ENCODE measurements at regions of chr15 and their contacts with region 1.

Region 1: DNA sequence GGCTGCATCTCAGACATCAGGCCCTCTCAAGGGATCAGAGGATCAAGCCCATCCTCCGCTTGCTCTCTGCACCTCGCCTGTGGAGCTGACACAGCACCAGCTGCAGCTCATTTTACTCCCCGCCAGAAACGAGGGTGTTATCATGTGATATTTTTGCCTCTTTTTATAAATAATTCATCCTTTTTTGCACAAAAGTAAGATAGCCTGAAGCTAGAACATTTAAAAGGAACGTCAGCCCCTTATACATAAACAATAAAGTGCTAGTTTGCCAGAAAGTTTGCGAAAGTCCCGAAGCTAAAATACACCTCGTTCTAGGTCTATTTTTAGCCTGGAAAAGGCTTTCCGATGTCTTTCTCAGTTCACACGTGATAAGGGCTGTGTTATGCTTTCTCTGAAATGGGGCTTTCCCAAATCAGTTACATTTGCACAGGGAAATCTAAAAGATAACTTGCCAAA is 9.6 kb upstream of the FAM174B start:
- DNase-seq: no peak
- H3K4me3 ChIP-seq: peak overlapping the region in 1 of 3 donors; percentile 12
- H3K27ac ChIP-seq: peak overlapping the region; percentile 40 to 66
- H3K4me1 ChIP-seq: peaks cover 0 to 9% of the 10 kb centered on the region in 2 donors
- H3K27me3 ChIP-seq: no peaks in the 10 kb centered on the region
- CTCF ChIP-seq: no peak
- POLR2A ChIP-seq: no peak

Region 2: GRCh38 chr15:92617549-92618520 is 47.3 kb before region 1 on chr15:
- intact Hi-C with region 1: loop called (anchors 10 kb)
- DNase-seq: peak; percentile 43 to 64
- H3K4me3 ChIP-seq: no peak overlapping the region
- H3K27ac ChIP-seq: peak overlapping the region; percentile 62 to 65
- H3K4me1 ChIP-seq: no peaks in the 10 kb centered on the region
- H3K27me3 ChIP-seq: no peaks in the 10 kb centered on the region
- CTCF ChIP-seq: no peak
- POLR2A ChIP-seq: no peak